ENCODE measurements at regions of chr12 and their contacts with region 1.

Region 1: DNA sequence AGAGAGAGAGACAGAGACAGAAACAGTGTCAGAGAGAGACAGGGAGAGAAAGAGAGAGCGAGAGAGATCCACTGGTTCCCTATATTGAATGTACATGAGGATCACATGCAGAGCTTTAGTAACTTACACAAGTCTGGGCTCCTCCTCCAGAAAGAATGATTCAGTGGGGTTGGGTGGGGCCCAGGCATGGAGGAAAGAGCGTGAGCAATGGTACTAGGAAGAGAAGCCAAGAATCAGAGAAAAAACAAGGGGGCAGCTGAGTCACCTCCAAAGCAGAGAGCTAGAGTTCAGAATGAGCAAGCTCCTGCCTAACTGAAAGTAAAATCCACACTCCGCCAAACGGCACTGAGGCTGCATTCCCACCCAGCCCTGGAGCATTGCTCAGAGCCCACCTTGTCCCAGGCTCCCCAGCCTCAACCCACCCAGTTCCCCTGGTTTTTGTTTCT is 670.1 kb upstream of the TBX3 start:
- DNase-seq: peak; percentile 99
- H3K4me3 ChIP-seq: peak overlapping the region; percentile 41 to 51 (median 47)
- H3K27ac ChIP-seq: peak overlapping the region; percentile 96
- H3K4me1 ChIP-seq: peaks cover 17% of the 10 kb centered on the region
- H3K27me3 ChIP-seq: no peaks in the 10 kb centered on the region
- CTCF ChIP-seq: no peak

Region 2: DNA sequence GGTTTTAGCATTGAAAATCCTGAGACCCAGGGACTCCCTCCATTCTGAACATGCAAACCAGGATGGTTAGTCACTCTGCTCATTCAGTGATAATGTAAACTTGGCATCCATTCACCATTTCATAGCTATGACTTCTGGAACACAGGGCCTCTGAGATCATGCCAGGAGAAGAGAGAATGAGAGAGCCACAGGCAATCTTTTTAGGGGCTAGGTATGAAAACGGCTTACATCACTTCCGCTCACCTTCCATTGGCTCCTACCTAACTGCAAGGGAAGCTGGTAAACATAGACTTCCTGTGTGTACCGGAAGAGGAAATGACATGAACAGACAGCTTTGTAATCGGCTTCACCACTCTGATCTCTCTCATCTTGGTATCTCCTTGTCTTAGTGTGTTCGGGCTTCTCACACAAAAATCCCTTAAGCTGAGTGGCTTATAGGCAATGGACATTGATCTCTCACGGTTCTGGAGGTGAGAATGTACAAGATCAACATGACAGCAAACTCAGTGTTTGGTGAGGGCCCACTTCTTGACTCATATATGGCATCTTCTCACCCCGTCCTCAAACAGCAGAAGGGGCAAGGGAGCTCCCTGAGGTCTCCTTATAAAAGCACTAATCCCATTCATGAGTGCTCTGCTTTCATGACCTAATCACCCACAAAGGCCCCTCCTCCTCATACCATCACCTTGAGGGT is 204.2 kb before region 1 on chr12:
- CTCF ChIA-PET with region 1: no interaction called
- dilution Hi-C with region 1: no loop called
- in situ Hi-C with region 1: no loop called
- intact Hi-C with region 1: no loop called
- DNase-seq: peak; percentile 58
- H3K4me3 ChIP-seq: no peak overlapping the region
- H3K27ac ChIP-seq: peak overlapping the region; percentile 55
- H3K4me1 ChIP-seq: peaks cover 25% of the 10 kb centered on the region
- H3K27me3 ChIP-seq: no peaks in the 10 kb centered on the region
- CTCF ChIP-seq: no peak

Region 3: DNA sequence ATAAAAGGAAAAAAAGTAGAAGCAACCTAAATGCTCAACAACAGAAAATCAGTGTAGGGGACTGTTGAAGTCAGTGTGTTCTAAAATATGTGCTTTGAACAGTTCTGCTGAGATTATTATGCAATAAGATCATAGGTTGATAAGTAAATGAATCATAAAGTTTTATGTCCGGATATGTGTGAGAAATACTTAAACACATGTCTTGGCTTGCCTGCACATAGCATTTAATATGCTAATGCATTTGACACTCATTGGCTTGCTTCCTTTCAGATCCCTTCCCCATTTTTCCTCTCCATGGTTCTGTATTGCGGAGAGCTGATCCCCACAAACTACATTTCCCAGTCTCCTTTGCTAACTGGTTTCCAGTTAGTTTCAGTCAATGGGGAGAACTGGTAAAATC is 96.2 kb before region 1 on chr12:
- CTCF ChIA-PET with region 1: no interaction called
- dilution Hi-C with region 1: no loop called
- in situ Hi-C with region 1: no loop called
- intact Hi-C with region 1: loop called (anchors 5 kb)
- DNase-seq: peak; percentile 94
- H3K4me3 ChIP-seq: no peak overlapping the region
- H3K27ac ChIP-seq: no peak overlapping the region
- H3K4me1 ChIP-seq: peaks cover 22% of the 10 kb centered on the region
- H3K27me3 ChIP-seq: no peaks in the 10 kb centered on the region
- CTCF ChIP-seq: no peak

Region 4: DNA sequence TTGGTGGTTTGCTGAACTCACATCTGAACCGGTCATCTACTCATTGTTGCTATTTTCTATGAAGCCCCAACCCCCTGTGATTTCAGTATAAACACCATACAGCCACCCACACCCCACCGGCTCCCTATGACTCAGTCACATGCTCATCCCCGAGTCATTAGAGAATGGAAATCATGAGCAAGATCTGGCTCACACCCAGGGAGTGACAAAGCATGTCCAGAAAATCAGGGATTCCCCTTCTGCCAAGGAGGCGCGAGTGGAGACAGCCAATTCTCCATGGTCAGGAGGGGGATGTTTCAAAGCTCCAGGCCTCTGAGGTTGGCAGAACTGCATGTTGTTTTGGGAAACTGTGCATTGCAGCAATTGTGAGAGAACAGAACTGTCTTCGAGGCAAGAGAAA is 12.6 kb before region 1 on chr12:
- CTCF ChIA-PET with region 1: no interaction called
- dilution Hi-C with region 1: no loop called
- in situ Hi-C with region 1: no loop called
- intact Hi-C with region 1: loop called (anchors 1 kb)
- DNase-seq: peak; percentile 100
- H3K4me3 ChIP-seq: no peak overlapping the region
- H3K27ac ChIP-seq: peak overlapping the region; percentile 93
- H3K4me1 ChIP-seq: peaks cover 18% of the 10 kb centered on the region
- H3K27me3 ChIP-seq: no peaks in the 10 kb centered on the region
- CTCF ChIP-seq: no peak

Measured in mammary epithelial cell (primary cell).